ENCODE measurements at regions of chr1 and their contacts with region 1.

Region 1: DNA sequence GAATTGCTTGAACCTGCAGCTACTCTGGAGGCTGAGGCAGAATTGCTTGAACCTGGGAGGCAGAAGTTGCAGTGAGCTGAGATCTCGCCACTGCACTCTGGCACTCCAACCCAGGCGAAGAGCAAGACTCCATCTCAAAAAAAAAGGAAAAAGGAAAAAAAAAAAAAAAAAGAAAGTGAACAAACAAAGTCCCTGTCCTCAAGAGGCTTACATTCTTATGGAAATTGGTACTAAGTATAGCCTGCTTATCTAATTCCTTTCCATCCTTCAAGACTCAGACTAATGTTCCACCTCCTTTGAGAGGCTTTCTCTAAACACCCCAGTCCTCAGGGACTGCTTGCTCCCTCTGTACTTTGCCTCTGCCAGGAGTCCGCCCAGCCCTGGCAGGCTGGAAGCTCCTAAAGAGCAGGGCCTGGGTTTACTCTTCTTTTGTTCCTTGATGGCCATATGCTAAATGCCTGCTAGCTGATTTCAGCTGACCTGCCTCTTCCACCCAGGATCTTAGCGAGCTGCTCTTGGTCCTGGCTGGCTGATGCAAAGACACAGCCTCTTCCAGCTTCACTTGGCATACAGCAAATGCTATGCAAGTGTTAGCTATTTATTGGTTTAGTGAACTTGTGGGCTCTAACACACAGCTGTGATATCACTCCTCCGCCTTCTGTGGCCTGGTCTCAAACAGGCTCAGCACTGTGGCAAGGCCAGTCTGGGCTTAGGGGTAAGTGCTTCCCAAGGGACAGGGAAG is 9.8 kb downstream of the SLC9A1 start:
- DNase-seq: no peak
- H3K4me3 ChIP-seq: no peak overlapping the region
- CTCF ChIP-seq: no peak

Region 2: DNA sequence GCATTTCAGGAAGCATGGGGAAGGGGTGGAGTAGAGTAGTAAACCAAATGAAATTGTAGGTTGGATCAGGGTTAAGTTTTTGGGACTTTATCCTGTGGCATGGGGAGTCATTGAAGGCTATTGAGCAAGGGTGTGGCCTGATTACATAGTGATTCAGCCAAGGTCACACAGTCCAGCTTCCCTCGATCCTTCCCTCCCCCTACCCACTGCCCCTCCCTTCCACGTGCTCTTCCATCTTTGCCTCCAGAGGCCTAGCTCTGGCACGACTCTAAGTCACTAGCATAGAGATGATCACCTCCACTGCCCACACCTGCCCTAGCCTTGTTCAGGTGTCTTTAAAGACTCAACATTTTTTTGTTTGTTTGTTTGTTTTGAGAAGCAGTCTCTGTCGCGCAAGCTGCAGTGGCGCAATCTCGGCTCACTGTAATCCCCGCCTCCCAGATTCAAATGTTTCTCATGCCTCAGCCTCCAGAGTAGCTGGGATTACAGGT is 47.0 kb after region 1 on chr1:
- in situ Hi-C with region 1: loop called (anchors 5 kb)
- DNase-seq: no peak
- H3K4me3 ChIP-seq: no peak overlapping the region
- CTCF ChIP-seq: no peak

Region 3: GRCh38 chr1:27225621-27226020 is 80.5 kb after region 1 on chr1:
- in situ Hi-C with region 1: loop called (anchors 5 kb)
- DNase-seq: no peak
- H3K4me3 ChIP-seq: no peak overlapping the region
- CTCF ChIP-seq: no peak

Region 4: DNA sequence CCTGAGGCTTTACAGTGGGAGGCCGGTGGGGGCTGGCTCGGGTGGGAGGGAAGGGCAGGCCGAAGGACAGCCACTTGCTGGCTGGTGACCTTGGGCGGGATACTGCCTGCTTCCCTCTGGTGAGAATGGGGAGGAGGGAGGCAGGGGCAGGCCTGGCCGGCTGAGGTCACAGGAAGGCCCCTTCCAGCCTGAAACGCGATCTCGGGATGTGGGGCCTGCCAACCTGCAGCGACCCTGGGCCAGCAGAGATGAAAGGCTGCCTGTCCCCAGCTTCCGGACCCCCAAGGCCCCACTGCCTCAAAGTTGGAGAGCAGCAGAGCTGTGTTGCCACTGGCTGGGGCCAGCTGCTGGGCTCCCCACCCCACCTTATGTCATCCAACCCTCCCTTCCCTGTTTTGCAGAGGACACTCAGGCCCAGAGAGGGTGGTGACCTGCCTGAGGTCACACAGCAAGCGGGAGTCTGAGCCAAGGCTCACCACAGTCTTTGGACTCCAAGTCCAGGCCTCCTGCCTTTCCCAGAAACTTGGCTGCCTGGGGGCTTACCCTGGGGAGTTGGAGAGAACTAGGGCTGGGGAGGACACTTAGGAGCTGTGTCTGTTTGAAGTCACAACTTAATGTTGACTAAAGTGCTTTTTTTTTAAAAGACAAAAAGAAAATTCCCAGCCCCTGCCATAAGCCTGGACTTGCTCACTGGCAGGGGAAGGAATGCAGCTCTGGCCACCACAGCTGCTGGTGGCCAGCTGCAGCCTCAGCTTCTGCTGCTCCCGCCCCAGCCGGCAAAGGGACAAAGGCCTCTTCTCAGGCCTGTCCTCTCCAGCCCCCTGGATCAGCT is 359.7 kb after region 1 on chr1:
- in situ Hi-C with region 1: no loop called
- DNase-seq: no peak
- H3K4me3 ChIP-seq: no peak overlapping the region
- CTCF ChIP-seq: no peak